Activated CD4-positive, alpha-beta T cell treated with anti-CD3 and anti-CD28 coated beads, Interleukin-2, amount 10 ng/mL, durations not matched to agents 24 days and 14 days (primary cell): ENCODE measurements at regions of chr1 and their contacts with region 1.

Region 1: DNA sequence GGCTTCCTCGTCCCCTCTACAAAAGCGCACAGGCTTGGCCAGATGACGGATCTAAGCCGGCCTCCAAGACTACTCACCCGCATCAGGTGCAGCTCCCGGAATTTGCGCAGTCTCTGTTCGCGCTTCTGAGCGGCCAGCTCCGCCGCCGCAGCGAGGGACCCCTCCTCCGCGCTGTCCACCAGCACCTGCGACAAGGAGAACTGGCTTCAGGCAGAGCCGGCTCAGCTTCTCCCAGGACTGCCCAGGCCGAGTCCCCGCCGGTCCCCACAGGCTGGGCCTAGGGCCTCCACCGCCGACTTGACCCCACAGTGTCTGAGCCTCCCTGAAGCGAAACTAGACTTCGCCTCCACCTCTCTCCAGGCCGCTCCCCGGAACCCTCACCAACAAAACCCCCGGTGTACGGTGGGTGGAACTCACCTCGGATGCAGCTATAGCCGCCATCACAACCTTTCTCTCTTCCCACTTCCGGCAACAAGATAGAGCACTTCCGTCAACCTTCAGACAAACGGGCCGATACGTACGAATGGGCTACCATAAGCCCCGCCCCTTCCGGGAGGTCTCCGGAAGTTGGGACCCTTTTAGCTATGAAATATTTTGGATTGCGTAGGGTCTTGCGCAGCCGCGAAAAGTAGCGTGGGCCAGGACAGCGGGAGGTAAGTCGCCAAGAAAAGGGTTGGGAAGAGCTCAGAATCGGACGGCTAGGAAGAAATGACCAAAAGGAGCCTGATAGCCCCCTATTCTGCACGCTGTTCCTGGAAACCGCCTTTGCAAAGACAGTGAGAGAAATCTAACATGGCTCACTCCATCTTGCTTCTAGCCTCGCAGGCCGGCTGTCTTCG is at the start of gene SYF2:
- DNase-seq: peak; percentile 96
- H3K4me3 Mint-ChIP-seq: no peak within 1 kb of the TSS
- H3K27ac Mint-ChIP-seq: no peak within 1 kb of the TSS
- H3K4me1 Mint-ChIP-seq: peaks cover 20% of the 10 kb centered on the region
- H3K27me3 Mint-ChIP-seq: no peaks in the 10 kb centered on the region
- total RNA-seq, gene SYF2: 36.9 and 40.7 TPM in 2 replicates

Region 2: DNA sequence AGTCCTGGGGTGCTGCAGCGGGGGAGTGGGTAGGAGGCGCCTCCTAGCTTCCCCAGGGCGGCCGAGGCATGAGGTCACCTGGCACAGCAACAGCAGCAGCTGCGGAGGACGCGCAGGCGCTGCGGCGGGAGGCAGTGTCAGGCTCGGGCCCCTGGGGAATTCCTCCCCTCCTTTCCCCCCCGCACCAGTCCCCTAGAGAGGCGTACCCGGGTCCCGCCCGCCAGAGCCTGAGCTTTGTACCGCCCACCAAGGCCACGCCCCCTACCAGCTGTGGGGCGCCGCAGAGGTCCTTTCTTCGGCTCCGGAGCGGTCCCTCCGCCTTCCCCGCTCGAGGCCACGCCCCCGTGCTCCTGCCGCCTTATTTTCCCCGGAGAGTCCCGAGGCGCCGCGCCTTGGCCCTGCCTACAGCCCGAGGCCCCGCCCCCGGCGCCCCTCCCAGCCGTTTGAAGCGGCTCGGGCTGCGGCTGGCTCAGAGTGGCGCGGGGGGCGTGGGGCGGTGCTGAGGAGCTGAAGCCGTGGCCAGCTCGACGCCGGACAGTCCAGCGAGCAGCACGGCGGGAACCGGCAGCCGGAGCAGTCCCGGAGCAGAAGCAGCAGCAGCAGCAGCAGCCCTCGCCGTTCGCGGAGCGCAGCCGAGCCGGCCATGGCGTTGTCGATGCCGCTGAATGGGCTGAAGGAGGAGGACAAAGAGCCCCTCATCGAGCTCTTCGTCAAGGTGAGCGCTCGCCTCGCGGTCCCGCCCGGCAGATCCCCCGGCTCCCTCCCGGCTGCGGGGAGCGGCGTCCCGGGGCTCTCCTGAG is 487.1 kb before region 1 on chr1 and contains the start of gene CLIC4:
- intact Hi-C with region 1: loop called (anchors 2 kb)
- DNase-seq: peak; percentile 100
- H3K4me3 Mint-ChIP-seq: peak within 1 kb of the TSS; percentile 94
- H3K27ac Mint-ChIP-seq: peak within 1 kb of the TSS; percentile 86
- H3K4me1 Mint-ChIP-seq: peaks cover 53% of the 10 kb centered on the region
- H3K27me3 Mint-ChIP-seq: no peaks in the 10 kb centered on the region
- total RNA-seq, gene CLIC4: 15.7 and 17.4 TPM in 2 replicates

Region 3: GRCh38 chr1:25247024-25247828 is 15.0 kb after region 1 on chr1 and contains the start of gene RSRP1:
- intact Hi-C with region 1: loop called (anchors 1 kb)
- DNase-seq: peak; percentile 100
- H3K4me3 Mint-ChIP-seq: peak within 1 kb of the TSS; percentile 97
- H3K27ac Mint-ChIP-seq: peak within 1 kb of the TSS; percentile 99
- H3K4me1 Mint-ChIP-seq: peaks cover 42% of the 10 kb centered on the region
- H3K27me3 Mint-ChIP-seq: peaks cover 7% of the 10 kb centered on the region
- total RNA-seq, gene RSRP1: 117 and 118 TPM in 2 replicates